CD8-positive, alpha-beta T cell (primary cell): ENCODE measurements at regions of chr12 and their contacts with region 1.

Region 1: GRCh38 chr12:14774906-14775762 is 28.1 kb downstream of the WBP11 start:
- DNase-seq: peak in 8 of 9 experiments; percentile 5 to 64 (median 36)
- ATAC-seq: no peak
- H3K4me3 ChIP-seq: peak overlapping the region; percentile 74 to 92
- H3K4me3 Mint-ChIP-seq: peak overlapping the region; percentile 100
- H3K27ac ChIP-seq: peak overlapping the region; percentile 66 to 69
- H3K27ac Mint-ChIP-seq: peak overlapping the region; percentile 99
- H3K4me1 ChIP-seq: peaks cover 31% of the 10 kb centered on the region
- H3K4me1 Mint-ChIP-seq: peaks cover 59% of the 10 kb centered on the region
- H3K27me3 ChIP-seq: no peaks in the 10 kb centered on the region
- H3K27me3 Mint-ChIP-seq: no peaks in the 10 kb centered on the region
- CTCF ChIP-seq: no peak

Region 2: DNA sequence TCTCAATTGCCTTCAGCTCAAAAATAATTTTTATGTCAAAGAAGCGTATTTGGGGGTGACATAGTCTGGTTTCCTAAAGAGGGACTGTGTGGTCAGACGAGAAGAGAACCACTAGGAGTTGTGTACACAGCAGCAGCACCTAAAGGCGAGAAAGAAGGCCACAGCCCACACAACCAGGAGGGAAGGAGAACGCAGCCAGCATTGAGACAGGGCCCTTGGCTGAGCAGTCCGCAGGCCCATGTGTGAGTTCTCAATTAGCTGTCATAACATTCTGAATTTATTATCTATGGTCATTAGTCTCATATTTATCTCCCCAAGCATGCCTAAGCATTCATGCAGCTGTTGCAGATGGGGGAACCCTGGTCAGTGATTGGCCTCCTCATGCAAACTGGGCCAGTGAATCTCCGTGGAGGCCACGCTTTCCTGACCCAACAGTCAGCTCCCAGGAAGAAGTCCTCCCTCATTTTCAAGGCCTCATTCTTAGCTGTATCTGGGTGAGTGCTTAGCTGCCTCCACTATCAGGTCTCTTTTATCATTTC is 490.9 kb before region 1 on chr12:
- CTCF ChIA-PET with region 1: no interaction called
- POLR2A ChIA-PET with region 1: no interaction called
- intact Hi-C with region 1: no loop called
- DNase-seq: peak in 1 of 9 experiments; percentile 24
- ATAC-seq: no peak
- H3K4me3 ChIP-seq: no peak overlapping the region
- H3K4me3 Mint-ChIP-seq: no peak overlapping the region
- H3K27ac ChIP-seq: no peak overlapping the region
- H3K27ac Mint-ChIP-seq: no peak overlapping the region
- H3K4me1 ChIP-seq: no peaks in the 10 kb centered on the region
- H3K4me1 Mint-ChIP-seq: no peaks in the 10 kb centered on the region
- H3K27me3 ChIP-seq: no peaks in the 10 kb centered on the region
- H3K27me3 Mint-ChIP-seq: no peaks in the 10 kb centered on the region
- CTCF ChIP-seq: no peak

Region 3: GRCh38 chr12:14795028-14795448 is 19.9 kb after region 1 on chr12:
- CTCF ChIA-PET with region 1: interaction called, 10 read pairs
- POLR2A ChIA-PET with region 1: interaction called, 184 read pairs
- intact Hi-C with region 1: loop called in 1 of 2 experiments (anchors 1 kb)
- DNase-seq: no peak
- ATAC-seq: no peak
- H3K4me3 ChIP-seq: no peak overlapping the region
- H3K4me3 Mint-ChIP-seq: no peak overlapping the region
- H3K27ac ChIP-seq: no peak overlapping the region
- H3K27ac Mint-ChIP-seq: no peak overlapping the region
- H3K4me1 ChIP-seq: no peaks in the 10 kb centered on the region
- H3K4me1 Mint-ChIP-seq: peaks cover 4% of the 10 kb centered on the region
- H3K27me3 ChIP-seq: no peaks in the 10 kb centered on the region
- H3K27me3 Mint-ChIP-seq: no peaks in the 10 kb centered on the region
- CTCF ChIP-seq: no peak

Region 4: GRCh38 chr12:14803011-14803829 is 28.1 kb after region 1 on chr12 and contains the starts of genes C12orf60 and WBP11:
- CTCF ChIA-PET with region 1: interaction called, 38 read pairs
- POLR2A ChIA-PET with region 1: interaction called, 184 read pairs
- intact Hi-C with region 1: loop called (anchors 1 kb)
- DNase-seq: peak; percentile 76 to 98 (median 87)
- ATAC-seq: peak; percentile 94
- H3K4me3 ChIP-seq: peak within 1 kb of the TSS; percentile 86 to 95
- H3K4me3 Mint-ChIP-seq: no peak within 1 kb of the TSS
- H3K27ac ChIP-seq: peak within 1 kb of the TSS; percentile 91 to 98
- H3K27ac Mint-ChIP-seq: no peak within 1 kb of the TSS
- H3K4me1 ChIP-seq: peaks cover 28% of the 10 kb centered on the region
- H3K4me1 Mint-ChIP-seq: peaks cover 12% of the 10 kb centered on the region
- H3K27me3 ChIP-seq: no peaks in the 10 kb centered on the region
- H3K27me3 Mint-ChIP-seq: no peaks in the 10 kb centered on the region
- CTCF ChIP-seq: no peak
- total RNA-seq, gene C12orf60: 0.14 TPM in 1 of 2 experiments, not detected in the other
- total RNA-seq, gene WBP11: 171 to 184 TPM

Region 5: DNA sequence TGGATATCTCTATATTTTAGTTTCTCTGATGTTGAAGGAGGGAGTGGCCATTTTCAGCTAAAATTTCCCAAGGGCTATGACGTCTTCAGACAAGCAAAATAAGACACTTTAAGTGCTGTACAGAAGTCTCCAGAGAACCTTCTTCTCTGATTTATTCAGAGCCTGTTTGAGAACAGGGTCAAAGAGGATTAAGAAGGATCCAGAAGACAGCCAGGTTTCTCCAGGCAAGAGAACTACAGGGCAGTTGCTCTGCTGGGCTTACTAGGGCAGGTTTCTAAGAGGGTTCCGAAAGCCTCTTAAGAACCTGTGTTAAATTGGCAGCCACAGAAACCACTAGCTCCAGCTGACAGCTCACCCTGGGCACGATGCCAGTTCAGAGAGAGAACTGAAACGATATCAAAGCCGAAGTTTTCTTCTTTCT is 109.3 kb after region 1 on chr12:
- CTCF ChIA-PET with region 1: no interaction called
- POLR2A ChIA-PET with region 1: interaction called, 4 read pairs
- intact Hi-C with region 1: loop called in 1 of 2 experiments (anchors 5 kb)
- DNase-seq: peak; percentile 69 to 94 (median 89)
- ATAC-seq: peak; percentile 90
- H3K4me3 ChIP-seq: no peak overlapping the region
- H3K4me3 Mint-ChIP-seq: peak overlapping the region; percentile 58
- H3K27ac ChIP-seq: peak overlapping the region in 1 of 2 experiments; percentile 7
- H3K27ac Mint-ChIP-seq: peak overlapping the region; percentile 89
- H3K4me1 ChIP-seq: peaks cover 38% of the 10 kb centered on the region
- H3K4me1 Mint-ChIP-seq: peaks cover 37% of the 10 kb centered on the region
- H3K27me3 ChIP-seq: peaks cover 0 to 6% of the 10 kb centered on the region in 2 experiments
- H3K27me3 Mint-ChIP-seq: peaks cover 7% of the 10 kb centered on the region
- CTCF ChIP-seq: no peak

Region 6: DNA sequence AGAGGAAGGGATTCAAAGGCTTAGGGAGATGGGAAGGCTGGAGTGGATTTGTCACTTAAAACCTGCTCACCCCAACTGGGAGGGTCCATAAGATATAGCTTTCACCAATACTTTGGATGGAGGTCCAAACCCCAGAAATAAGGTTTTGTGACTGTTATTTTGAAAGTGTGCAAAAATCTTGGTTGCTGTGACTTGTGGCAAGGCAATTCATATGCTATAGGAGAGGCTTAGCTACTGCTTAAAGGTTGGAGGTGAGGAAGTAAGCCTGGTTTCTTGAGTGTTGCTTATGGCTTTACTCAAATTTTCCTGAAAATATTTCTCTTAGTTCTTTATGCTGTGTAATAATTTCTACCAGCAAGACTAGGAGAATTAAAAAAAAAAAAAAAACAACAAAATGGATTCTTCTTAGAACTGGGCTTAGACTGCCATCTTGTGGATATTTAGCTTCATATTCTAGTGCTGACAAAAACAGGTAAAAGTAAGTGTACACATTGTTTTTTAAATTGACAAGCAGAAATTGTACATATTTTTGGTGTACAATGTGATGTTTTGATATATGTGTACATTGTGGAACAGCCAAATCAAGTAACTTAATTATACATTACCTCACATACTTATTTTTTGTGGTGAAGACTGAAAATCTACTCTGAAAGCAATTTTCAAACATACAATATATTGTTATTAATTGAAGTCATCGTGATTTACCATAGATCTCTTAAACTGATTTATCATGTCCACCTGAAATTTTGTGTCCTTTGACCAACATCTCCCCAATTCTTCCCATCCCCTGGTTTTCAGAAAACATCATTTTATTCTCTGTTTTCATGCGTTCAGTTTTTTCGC is 220.7 kb after region 1 on chr12:
- CTCF ChIA-PET with region 1: interaction called, 4 read pairs
- POLR2A ChIA-PET with region 1: interaction called, 19 read pairs
- intact Hi-C with region 1: loop called (anchors 2 to 5 kb)
- DNase-seq: peak in 2 of 9 experiments; percentile 78 to 85
- ATAC-seq: peak; percentile 70
- H3K4me3 ChIP-seq: no peak overlapping the region
- H3K4me3 Mint-ChIP-seq: peak overlapping the region; percentile 20
- H3K27ac ChIP-seq: no peak overlapping the region
- H3K27ac Mint-ChIP-seq: peak overlapping the region; percentile 63
- H3K4me1 ChIP-seq: peaks cover 29% of the 10 kb centered on the region
- H3K4me1 Mint-ChIP-seq: peaks cover 31% of the 10 kb centered on the region
- H3K27me3 ChIP-seq: no peaks in the 10 kb centered on the region
- H3K27me3 Mint-ChIP-seq: peaks cover 2% of the 10 kb centered on the region
- CTCF ChIP-seq: peak; percentile 75